ENCODE measurements at regions of chr19 and their contacts with region 1.

Region 1: DNA sequence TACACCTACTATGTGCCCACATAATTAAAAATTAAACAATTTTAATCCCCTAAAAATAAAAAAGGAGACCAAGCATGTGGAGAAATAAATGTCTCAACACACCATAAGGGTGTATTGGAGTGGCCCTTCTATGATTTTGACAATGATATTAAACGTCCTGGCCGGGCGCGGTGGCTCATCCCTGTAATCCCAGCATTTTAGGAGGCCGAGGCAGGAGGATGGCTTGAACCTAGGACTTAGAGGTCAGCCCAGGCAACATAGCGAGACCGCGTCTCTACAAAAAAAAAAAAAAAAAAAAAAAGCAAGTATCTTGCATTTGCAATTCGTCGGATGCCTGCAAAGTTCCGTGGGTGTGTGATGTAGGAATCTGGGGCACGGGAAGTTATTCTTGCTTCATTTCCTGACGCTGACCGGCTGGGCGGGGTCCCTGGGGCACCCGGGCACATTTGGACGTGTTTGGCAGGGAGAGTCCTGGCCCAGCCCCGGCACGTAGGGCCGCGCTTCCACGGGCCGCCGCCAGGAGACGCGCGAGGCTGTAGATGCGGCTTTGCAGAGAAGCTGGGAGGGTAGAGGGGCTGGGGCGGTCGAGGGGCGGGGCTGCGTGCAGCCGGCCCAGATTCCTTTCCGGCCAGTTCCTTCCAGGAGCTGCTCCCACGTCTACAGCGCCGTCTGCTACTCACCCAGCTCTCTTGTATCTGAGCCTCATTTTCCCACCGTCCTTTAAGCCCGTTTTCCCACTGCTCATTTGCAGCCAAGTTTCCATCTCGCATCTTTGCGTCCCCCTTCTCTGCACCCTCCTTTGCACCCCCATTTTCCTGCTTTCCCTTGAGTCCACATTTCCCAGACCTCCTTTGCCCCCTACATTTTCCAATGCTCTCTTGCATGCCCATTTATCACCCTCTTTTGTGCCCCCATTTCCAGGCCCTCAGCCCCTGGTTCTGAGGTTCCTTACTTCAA is 2.2 kb upstream of the TSPAN16 start:
- DNase-seq: peak; percentile 71
- H3K4me3 Mint-ChIP-seq: peak overlapping the region; percentile 56
- H3K27ac Mint-ChIP-seq: no peak overlapping the region
- H3K4me1 Mint-ChIP-seq: peaks cover 9% of the 10 kb centered on the region
- H3K27me3 Mint-ChIP-seq: peaks cover 22% of the 10 kb centered on the region

Region 2: DNA sequence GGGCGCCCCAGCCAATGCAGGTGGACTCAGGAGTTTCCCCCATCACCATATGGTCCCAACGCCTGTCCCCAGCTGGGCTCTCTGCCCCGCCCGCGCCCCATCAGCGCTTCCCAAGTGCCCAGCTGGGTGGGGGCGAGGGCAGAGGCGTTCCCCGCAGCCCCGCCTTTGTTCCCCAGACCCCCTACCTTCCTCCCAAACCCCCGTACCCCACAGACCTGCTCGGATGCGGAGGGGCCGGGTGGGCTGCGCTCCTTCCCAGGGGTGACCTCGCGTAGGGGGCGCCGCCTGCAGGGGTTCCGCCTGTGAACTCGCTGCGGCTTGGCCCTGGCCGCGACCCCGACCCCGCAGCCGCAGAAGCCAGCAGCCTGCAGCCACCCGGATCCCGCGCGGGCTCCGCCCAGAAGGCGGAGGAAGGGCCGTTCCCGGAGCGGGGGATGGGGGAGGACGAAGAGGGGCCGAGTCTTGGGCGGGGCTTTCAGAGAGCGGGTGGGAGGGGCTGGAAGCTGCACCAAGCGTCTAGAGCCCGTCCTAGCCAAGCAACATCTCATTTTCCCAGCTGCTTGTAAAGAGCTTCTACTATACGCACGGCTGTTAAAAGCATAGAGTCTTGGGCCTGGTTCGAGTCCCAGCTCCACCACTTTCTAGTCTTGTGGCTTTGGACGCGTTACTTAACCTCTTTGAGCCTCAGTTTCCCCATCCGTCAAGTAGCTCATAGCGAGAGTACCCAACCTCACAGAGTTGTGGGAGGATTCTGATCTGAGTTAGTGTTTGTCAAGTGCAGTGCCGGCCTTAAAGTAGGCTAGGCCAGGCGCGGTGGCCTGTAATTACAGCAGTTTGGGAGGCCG is 45.8 kb after region 1 on chr19 and contains the start of gene RAB3D:
- intact Hi-C with region 1: loop called (anchors 5 kb)
- DNase-seq: peak; percentile 76
- H3K4me3 Mint-ChIP-seq: peak within 1 kb of the TSS; percentile 84
- H3K27ac Mint-ChIP-seq: no peak within 1 kb of the TSS
- H3K4me1 Mint-ChIP-seq: peaks cover 22% of the 10 kb centered on the region
- H3K27me3 Mint-ChIP-seq: no peaks in the 10 kb centered on the region
- total RNA-seq, gene RAB3D: 9.3 and 11.6 TPM in 2 replicates

Region 3: DNA sequence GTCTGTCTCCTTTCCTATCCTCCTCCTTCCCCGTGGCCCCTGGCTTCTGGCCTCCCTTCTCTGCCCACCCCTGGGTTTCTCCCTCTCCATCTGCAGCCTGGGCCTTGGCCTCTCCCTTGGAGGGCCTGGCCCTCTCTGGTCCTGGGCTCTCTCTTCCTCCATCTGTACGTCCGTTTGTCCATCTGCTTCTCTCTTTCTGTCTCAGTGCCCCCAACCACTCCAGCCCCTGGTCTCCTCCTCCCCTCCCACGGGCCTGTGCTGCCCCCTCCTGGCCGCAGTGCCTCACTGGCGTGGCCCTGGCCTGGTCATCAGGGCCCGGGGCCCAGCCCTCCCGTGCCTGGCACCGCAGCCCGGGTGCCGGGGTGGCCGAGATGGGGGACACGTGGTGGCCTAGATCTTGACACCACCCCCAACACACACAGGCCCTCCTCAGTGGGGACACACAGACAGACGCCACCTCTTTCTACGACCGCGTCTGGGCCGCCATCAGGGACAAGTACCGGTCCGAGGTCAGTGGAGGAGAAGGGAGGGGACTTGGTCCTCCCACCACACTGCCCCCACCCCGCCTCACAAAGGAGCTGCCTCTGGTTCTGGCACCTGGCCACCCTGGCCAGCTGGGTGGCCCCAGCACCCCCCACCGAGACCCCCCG is 153.1 kb after region 1 on chr19:
- intact Hi-C with region 1: loop called (anchors 5 kb)
- DNase-seq: no peak
- H3K4me3 Mint-ChIP-seq: no peak overlapping the region
- H3K27ac Mint-ChIP-seq: no peak overlapping the region
- H3K4me1 Mint-ChIP-seq: no peaks in the 10 kb centered on the region
- H3K27me3 Mint-ChIP-seq: no peaks in the 10 kb centered on the region

Measured in activated T-helper 2 cell treated with anti-CD3 and anti-CD28 coated beads, Interferon-gamma antibody, Interleukin-2, Interleukin-4, amounts not matched to agents 10 μg/mL and 5 μg/mL and 100 μg/mL, durations not matched to agents 14 hours and 24 hours and 36 hours (primary cell).